OCI-LY7 (cell line): ENCODE measurements at regions of chr17 and their contacts with region 1.

Region 1: DNA sequence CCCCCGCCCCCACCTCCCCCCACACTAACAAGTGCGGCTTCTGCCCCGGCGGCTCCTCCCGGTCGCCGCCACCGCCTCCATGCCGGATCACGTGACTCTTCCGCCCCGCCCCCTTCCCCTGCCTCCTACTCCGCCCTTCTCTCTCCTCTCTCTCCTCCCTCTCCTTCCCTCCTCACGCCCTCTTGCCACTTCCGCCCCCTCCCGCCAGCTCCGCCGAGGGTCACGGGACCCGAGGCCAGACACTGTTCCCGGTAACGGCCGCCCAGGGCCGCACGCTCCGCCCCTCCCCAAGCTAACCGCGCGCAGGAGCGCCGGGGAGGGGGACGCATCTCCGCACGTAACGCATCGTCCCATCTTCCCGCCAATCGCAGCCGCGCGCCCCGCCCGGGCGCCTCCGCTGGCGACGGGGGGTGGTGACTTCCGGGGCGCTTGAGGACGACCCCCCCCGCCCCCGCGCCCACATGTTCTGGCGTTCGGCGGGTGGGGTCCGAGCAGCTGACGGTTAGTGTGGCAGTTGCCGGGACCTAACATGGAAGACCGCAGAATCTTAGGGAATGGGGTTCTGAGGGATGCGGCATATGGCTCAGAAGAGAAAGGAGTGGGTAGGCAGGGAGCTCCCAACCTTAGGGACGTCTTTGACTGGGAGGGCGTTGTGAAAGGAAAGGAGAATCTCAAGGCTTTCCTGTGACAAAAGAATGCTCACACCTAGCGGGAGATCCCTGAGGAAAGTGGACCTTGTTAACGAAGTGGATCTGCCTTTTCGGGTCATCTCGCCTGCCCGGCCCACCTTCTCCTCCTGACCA is at the start of gene USP32:
- DNase-seq: peak; percentile 94
- H3K4me3 ChIP-seq: peak within 1 kb of the TSS; percentile 87
- H3K27ac ChIP-seq: peak within 1 kb of the TSS; percentile 57
- H3K4me1 ChIP-seq: peaks cover 22% of the 10 kb centered on the region
- CTCF ChIP-seq: 0 out of 2 replicates have a peak, but pooled peaks have one; percentile 28
- total RNA-seq, gene USP32: 13.7 and 16.9 TPM in 2 replicates

Region 2: GRCh38 chr17:59964482-59965328 is 427.5 kb before region 1 on chr17 and contains the start of gene RNFT1:
- CTCF ChIA-PET with region 1: no interaction called
- POLR2A ChIA-PET with region 1: no interaction called
- intact Hi-C with region 1: no loop called
- DNase-seq: peak; percentile 92
- H3K4me3 ChIP-seq: peak within 1 kb of the TSS; percentile 78
- H3K27ac ChIP-seq: peak within 1 kb of the TSS; percentile 62
- H3K4me1 ChIP-seq: peaks cover 20% of the 10 kb centered on the region
- CTCF ChIP-seq: no peak
- total RNA-seq, gene RNFT1: 17.2 and 21.5 TPM in 2 replicates

Region 3: DNA sequence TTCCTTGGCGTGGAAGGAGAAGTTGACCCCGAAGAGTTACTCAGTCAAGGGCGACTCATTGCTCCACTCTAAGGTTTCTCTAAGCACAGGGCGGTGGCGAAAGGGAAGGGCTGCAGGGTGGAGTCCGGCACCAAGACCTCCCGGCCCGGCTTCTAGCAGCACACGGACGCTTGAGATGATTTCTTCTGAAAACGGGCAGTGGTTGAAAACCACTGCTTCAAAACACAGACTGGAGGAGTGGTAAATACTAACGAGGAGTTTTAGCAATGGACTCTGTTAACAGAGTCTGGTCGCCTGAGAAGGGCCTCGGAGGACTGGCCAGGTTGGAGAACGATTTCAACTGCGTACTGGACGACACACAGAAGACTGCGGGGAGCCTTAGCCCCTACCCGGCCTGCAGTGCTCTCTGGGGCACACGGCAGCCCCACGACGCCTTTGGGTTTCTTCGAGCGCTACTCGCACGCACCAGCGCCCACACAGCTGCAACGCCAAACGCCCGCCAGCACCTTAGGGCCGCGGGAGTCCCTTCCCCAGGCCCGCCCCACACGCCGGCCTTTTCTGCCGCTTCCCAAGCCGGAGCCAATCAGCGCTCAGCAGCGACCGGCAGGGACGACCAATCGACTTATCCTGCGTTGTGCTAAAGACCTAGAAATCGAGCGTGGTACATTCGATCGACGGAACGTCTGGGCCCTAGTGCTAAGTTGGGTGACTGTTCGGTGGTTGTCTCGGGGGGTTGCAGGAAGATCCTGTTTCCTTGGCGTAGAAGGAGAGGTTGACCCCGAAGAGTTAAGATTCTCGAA is 256.9 kb before region 1 on chr17:
- CTCF ChIA-PET with region 1: no interaction called
- POLR2A ChIA-PET with region 1: no interaction called
- intact Hi-C with region 1: loop called (anchors 10 kb)
- DNase-seq: peak; percentile 97
- H3K4me3 ChIP-seq: peak overlapping the region; percentile 76
- H3K27ac ChIP-seq: peak overlapping the region; percentile 76
- H3K4me1 ChIP-seq: peaks cover 15% of the 10 kb centered on the region
- CTCF ChIP-seq: no peak

Region 4: GRCh38 chr17:60333628-60334031 is 58.6 kb before region 1 on chr17:
- CTCF ChIA-PET with region 1: no interaction called
- POLR2A ChIA-PET with region 1: no interaction called
- intact Hi-C with region 1: loop called (anchors 10 kb)
- DNase-seq: no peak
- H3K4me3 ChIP-seq: no peak overlapping the region
- H3K27ac ChIP-seq: no peak overlapping the region
- H3K4me1 ChIP-seq: no peaks in the 10 kb centered on the region
- CTCF ChIP-seq: no peak

Region 5: GRCh38 chr17:60468371-60468770 is 76.1 kb after region 1 on chr17:
- CTCF ChIA-PET with region 1: no interaction called
- POLR2A ChIA-PET with region 1: no interaction called
- intact Hi-C with region 1: no loop called
- DNase-seq: no peak
- H3K4me3 ChIP-seq: no peak overlapping the region
- H3K27ac ChIP-seq: no peak overlapping the region
- H3K4me1 ChIP-seq: peaks cover 8% of the 10 kb centered on the region
- CTCF ChIP-seq: no peak